MCF 10A (cell line): ENCODE measurements at regions of chr16 and their contacts with region 1.

Region 1: DNA sequence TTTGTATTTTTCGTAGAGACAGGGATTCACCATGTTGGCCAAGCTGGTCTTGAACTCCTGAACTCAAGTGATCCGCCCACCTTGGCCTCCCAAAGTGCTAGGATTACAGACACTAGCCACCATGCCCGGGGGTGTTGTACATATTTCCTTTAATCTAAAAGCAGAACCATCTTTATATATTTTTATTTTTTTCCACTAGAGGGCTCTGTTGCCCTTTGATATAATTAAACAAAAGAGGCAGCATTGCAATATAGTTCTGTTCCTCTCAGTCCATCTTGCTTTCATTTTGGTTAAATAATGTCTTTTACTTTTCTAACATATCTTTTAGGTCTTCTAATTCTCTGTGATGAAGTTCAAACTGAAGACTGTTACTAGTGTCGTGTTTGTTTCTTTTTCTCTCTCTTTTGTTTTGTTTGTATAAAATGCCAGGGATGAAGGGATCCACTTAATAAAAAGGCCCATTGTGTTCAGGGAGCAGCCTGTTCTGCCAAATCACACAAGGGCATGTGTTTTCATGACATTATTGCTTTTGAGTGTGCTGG is 23.4 kb downstream of the WWOX start:
- DNase-seq: peak; percentile 75
- H3K4me3 Mint-ChIP-seq: no peak overlapping the region
- H3K27ac Mint-ChIP-seq: no peak overlapping the region
- H3K4me1 Mint-ChIP-seq: peaks cover 6% of the 10 kb centered on the region
- H3K27me3 Mint-ChIP-seq: no peaks in the 10 kb centered on the region
- CTCF ChIP-seq: peak; percentile 51

Region 2: GRCh38 chr16:78045865-78046581 is 76.8 kb before region 1 on chr16:
- CTCF ChIA-PET with region 1: no interaction called
- POLR2A ChIA-PET with region 1: no interaction called
- intact Hi-C with region 1: no loop called
- DNase-seq: peak; percentile 28
- H3K4me3 Mint-ChIP-seq: no peak overlapping the region
- H3K27ac Mint-ChIP-seq: no peak overlapping the region
- H3K4me1 Mint-ChIP-seq: no peaks in the 10 kb centered on the region
- H3K27me3 Mint-ChIP-seq: peaks cover 30% of the 10 kb centered on the region
- CTCF ChIP-seq: no peak

Region 3: GRCh38 chr16:78099372-78100161 is 23.3 kb before region 1 on chr16 and contains the start of gene WWOX:
- CTCF ChIA-PET with region 1: interaction called, 20 read pairs
- POLR2A ChIA-PET with region 1: interaction called, 6 read pairs
- intact Hi-C with region 1: no loop called
- DNase-seq: peak; percentile 99
- H3K4me3 Mint-ChIP-seq: peak within 1 kb of the TSS; percentile 94
- H3K27ac Mint-ChIP-seq: peak within 1 kb of the TSS; percentile 98
- H3K4me1 Mint-ChIP-seq: peaks cover 34% of the 10 kb centered on the region
- H3K27me3 Mint-ChIP-seq: no peaks in the 10 kb centered on the region
- CTCF ChIP-seq: peak; percentile 99
- total RNA-seq, gene WWOX: 15.5 and 18.1 TPM in 2 replicates

Region 4: DNA sequence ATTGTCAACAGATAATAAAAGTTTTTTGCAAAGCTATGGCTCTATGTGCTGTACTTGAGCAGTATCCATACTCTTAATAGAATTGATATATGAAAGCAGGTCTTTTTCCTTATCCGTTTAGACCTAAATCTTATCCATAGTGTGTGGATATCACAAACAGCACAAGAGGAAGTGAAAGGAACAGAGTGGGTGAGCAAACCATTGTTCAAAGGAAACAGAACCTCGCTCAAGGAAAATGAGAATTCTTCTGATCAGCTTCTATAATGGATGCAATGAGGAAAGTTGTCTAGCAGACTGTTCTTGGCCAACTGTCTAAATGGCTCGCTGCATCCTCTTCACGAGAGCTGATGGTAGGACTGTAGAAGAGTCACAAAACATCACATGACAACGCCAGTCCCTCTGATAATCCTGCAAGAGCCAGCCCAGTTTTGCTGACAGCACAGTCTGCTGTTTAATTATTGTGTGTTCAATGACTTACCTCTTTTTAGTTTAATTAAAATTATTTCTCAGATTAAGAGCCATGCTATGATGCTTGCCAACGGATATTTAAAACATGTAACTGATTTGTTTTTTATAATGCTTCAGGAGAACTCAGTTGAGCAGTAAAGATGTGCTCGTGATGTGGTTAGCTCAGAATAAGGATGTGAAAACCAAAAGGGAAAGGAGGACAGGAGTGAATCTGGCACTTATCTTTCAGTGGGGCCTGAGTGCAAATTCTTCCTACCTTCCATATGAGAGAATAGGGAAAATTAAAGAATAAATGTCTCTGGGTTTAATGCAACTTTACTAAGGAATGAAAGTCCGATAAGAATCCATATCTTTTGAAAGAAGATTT is 15.2 kb after region 1 on chr16:
- CTCF ChIA-PET with region 1: interaction called, 36 read pairs
- POLR2A ChIA-PET with region 1: interaction called, 3 read pairs
- intact Hi-C with region 1: no loop called
- DNase-seq: no peak
- H3K4me3 Mint-ChIP-seq: no peak overlapping the region
- H3K27ac Mint-ChIP-seq: no peak overlapping the region
- H3K4me1 Mint-ChIP-seq: peaks cover 7% of the 10 kb centered on the region
- H3K27me3 Mint-ChIP-seq: no peaks in the 10 kb centered on the region
- CTCF ChIP-seq: no peak

Region 5: DNA sequence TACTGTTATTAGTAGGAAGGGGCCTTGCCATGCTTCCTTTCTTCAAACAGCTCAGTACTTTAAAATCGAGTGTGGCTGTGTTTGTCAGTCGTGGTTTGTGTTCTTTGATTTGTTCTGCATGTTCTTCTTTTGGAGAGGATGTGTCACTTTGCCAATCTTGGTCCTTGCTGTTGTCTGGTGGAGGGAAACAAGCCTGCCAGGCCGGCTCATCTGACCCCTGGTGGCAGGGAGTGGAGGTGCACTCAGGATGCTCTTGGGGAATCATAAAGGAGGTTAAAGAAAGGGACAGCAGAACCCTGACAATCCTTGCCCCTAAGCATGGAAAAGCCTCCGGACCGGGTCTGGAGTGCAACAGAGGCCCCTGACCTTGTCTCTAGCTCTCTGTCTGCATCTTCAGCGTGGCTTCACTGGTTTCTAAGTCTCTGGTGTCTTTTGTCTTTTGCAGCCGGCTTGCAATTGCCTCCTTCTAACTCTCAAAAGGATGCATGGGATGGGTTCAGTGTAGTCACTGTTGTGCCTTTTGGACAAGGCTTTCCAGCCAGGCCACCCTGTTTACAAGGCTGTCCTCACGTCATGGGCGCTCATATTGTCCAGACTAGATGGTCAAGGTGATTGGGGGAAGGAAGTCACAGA is 112.4 kb after region 1 on chr16:
- CTCF ChIA-PET with region 1: interaction called, 44 read pairs
- POLR2A ChIA-PET with region 1: interaction called, 3 read pairs
- intact Hi-C with region 1: loop called (anchors 1 kb)
- DNase-seq: peak; percentile 72
- H3K4me3 Mint-ChIP-seq: no peak overlapping the region
- H3K27ac Mint-ChIP-seq: no peak overlapping the region
- H3K4me1 Mint-ChIP-seq: peaks cover 15% of the 10 kb centered on the region
- H3K27me3 Mint-ChIP-seq: no peaks in the 10 kb centered on the region
- CTCF ChIP-seq: peak; percentile 76

Region 6: GRCh38 chr16:78503602-78504001 is 380.8 kb after region 1 on chr16:
- CTCF ChIA-PET with region 1: no interaction called
- POLR2A ChIA-PET with region 1: no interaction called
- intact Hi-C with region 1: loop called (anchors 5 kb)
- DNase-seq: peak; percentile 56
- H3K4me3 Mint-ChIP-seq: no peak overlapping the region
- H3K27ac Mint-ChIP-seq: no peak overlapping the region
- H3K4me1 Mint-ChIP-seq: peaks cover 7% of the 10 kb centered on the region
- H3K27me3 Mint-ChIP-seq: no peaks in the 10 kb centered on the region
- CTCF ChIP-seq: peak; percentile 89

Region 7: DNA sequence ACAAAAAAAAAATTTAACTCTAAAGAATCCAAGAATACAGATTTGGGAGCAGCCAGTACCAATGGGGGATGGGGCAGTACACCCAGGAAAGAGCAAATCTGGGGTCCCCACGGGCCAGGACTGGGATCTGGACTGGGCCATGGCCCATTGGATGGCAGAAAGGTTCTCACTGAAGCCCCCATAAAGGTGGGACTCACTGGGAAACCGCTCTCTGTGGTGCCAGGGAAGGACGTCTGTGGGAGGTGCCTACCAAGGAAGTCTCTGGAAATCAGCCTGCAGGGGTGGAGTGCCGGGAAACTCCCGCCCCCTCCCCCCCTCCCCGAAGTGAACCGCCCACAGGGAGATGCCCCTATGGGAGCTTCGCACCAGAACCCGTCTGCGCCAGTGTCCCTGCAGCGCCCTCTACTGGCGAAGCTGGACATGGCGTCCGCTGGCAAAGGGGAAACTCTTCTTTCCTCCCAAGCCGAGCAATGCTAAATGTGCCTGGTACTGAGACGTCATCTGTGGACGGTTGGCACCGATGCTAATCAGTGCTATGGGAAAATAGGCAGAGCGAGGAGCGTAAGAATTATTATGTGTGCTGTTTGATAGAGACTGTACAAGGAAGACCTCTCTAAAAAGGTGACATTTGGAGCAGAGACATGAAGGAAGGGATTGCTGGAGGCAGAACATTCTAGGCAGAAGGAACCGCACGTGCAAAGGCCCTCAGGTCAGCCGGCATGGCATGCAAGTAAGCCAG is 647.7 kb after region 1 on chr16:
- CTCF ChIA-PET with region 1: no interaction called
- POLR2A ChIA-PET with region 1: no interaction called
- intact Hi-C with region 1: loop called (anchors 10 kb)
- DNase-seq: peak; percentile 52
- H3K4me3 Mint-ChIP-seq: no peak overlapping the region
- H3K27ac Mint-ChIP-seq: no peak overlapping the region
- H3K4me1 Mint-ChIP-seq: peaks cover 5% of the 10 kb centered on the region
- H3K27me3 Mint-ChIP-seq: no peaks in the 10 kb centered on the region
- CTCF ChIP-seq: peak; percentile 75